AG04450 (cell line): ENCODE measurements at regions of chr3 and their contacts with region 1.

Region 1: DNA sequence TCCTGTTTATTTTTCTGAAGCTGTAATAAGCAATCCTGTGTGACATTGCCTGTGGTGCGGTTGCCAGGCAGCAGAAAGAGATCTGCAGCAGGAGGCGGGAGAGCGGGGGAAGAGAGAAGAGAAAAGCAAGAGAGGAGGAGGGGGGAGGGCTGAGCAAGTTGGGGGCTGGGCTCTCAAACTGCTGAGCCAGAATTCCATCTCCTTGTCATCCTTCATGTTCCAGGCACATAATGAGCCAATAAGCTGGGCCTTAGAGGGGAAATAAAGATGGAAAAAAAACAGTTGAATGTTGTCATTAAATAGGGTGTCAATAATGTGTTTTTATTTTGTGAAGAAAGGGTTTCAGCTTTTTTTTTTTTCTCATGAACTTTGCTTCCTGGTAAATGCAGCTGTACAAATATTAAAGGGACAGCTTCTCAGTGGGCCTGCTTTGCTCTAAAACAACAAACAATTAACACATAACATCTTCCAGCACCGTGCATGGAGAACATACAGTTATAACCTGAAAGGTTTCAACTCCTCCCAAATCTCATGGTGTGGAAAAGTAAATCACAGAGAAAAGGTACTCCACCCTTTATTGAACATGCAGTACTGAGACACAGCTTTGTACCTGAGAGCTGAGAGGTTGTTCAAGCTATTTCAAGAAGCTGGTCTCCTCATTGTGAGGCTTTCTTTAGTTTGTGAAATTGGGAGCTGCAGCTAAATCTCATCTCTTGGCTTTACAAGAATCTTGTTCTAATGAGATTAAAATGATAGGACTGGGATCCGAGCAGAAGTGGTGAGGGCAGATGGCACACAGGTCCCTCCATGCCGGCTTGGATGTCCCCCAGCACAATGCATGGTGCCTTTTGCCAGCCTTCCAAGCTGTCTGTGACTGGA is 451.1 kb upstream of the KCNMB2 start:
- DNase-seq: peak; percentile 48
- H3K4me3 ChIP-seq: no peak overlapping the region
- H3K27ac ChIP-seq: no peak overlapping the region
- H3K27me3 ChIP-seq: no peaks in the 10 kb centered on the region
- CTCF ChIP-seq: no peak

Region 2: GRCh38 chr3:178072391-178073305 is 12.5 kb before region 1 on chr3:
- CTCF ChIA-PET with region 1: interaction called, 7 read pairs
- POLR2A ChIA-PET with region 1: interaction called, 11 read pairs
- DNase-seq: no peak
- H3K4me3 ChIP-seq: no peak overlapping the region
- H3K27ac ChIP-seq: no peak overlapping the region
- H3K27me3 ChIP-seq: no peaks in the 10 kb centered on the region
- CTCF ChIP-seq: no peak